ENCODE measurements at regions of chr3 and their contacts with region 1.

Region 1: DNA sequence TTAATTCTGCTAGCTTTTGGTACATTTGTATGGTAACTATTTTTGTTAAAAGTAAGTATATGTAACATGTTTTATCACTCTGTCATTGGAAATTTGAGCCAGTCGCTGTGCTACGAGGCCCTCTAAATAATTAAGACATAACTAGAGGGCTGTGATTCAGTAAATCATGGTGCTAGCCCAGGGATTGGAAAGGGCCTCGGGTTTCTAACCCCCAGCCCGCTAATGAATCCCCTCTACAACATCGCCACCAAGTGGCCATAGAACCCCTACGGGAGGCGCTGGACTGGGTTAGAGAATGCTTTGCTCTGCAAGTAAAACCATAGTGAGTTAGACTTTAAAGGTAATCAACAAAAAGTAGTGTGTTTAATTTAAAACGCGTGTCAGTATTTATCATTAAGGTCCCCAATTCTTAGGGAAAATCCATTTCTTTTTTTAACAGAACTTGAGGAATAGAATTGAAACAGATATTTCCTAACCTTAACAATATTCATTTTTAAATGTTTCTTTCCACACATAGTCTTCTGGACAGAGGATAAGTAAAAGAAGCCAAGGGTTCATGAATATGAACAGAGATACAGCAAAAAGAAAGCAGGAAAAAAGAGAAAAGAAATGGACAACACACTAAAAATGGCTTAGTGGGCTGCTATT is 744.7 kb downstream of the EPHA3 start:
- DNase-seq: peak in 5 of 10 donors; percentile 4 to 54 (median 27)
- H3K4me3 ChIP-seq: no peak overlapping the region
- H3K27ac ChIP-seq: no peak overlapping the region
- H3K27me3 ChIP-seq: no peaks in the 10 kb centered on the region
- CTCF ChIP-seq: peak in 51 of 56 donors; percentile 16 to 74 (median 51)

Region 2: GRCh38 chr3:88225326-88226008 is 1626.6 kb before region 1 on chr3:
- intact Hi-C with region 1: loop called in 1 of 2 experiments (anchors 10 kb)
- DNase-seq: no peak
- H3K4me3 ChIP-seq: peak overlapping the region in 37 of 59 donors; percentile 0 to 51 (median 31)
- H3K27ac ChIP-seq: no peak overlapping the region
- H3K27me3 ChIP-seq: no peaks in the 10 kb centered on the region
- CTCF ChIP-seq: no peak

Region 3: GRCh38 chr3:89107461-89108290 is 744.4 kb before region 1 on chr3 and contains the start of gene EPHA3:
- intact Hi-C with region 1: loop called in 1 of 2 experiments (anchors 10 kb)
- DNase-seq: peak; percentile 46 to 89 (median 84)
- H3K4me3 ChIP-seq: peak within 1 kb of the TSS; percentile 33 to 86 (median 66)
- H3K27ac ChIP-seq: peak within 1 kb of the TSS in 26 of 59 donors; percentile 9 to 72 (median 38)
- H3K27me3 ChIP-seq: peaks cover 0 to 14% (median 0%) of the 10 kb centered on the region in 45 donors
- CTCF ChIP-seq: peak in 11 of 56 donors; percentile 7 to 23 (median 12)
- total RNA-seq, gene EPHA3: 4.4 to 18.2 (median 8.8) TPM